ENCODE measurements at regions of chrX and their contacts with region 1.

Region 1: DNA sequence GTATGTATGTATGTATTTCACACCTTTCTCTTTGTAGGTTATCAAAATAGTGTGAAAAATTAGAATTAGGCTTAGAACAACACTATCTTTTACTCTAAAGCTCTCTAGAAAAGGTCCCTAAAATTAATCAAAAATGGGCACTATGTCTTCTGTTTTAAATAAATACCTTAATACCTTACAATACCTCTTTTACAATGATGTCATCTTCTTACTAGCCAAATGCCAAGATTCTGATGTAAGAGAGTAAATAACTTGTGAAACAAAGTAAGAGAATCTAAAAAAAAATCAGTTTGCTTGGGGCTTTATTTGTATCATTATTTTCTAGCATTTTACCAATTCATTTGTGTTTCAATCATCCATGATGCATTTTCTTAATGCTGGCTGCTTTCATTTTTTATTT is 402.2 kb upstream of the MAGEB2 start:
- DNase-seq: no peak
- ATAC-seq: no peak
- H3K4me3 ChIP-seq: no peak overlapping the region
- H3K27ac ChIP-seq: no peak overlapping the region
- H3K4me1 ChIP-seq: no peaks in the 10 kb centered on the region
- H3K27me3 ChIP-seq: no peaks in the 10 kb centered on the region
- CTCF ChIP-seq: no peak
- EP300 ChIP-seq: no peak
- POLR2A ChIP-seq: no peak
- RAD21 ChIP-seq: no peak

Region 2: DNA sequence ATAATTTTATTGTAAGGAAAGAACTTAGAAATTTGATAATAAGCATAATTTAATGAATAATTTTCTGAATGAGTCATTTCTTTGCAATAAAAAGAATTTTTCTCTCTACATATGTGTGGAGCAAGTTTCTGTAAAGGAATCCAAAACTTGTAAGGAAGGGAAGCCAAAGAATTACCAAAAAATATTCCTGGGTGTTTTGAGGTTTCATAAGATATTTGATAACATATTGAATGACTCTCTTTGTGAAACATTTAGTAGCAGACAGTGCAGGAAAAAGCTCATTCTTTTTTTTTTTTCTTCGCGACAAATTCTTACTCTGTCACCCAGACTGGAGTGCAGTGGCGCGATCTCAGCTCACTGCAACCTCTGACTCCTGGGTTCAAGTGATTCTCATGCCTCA is 66.8 kb before region 1 on chrX:
- CTCF ChIA-PET with region 1: no interaction called
- POLR2A ChIA-PET with region 1: interaction called, 11 read pairs
- RAD21 ChIA-PET with region 1: no interaction called
- SMC1A ChIA-PET with region 1: no interaction called
- in situ Hi-C with region 1: no loop called
- intact Hi-C with region 1: no loop called
- DNase-seq: no peak
- ATAC-seq: no peak
- H3K4me3 ChIP-seq: no peak overlapping the region
- H3K27ac ChIP-seq: no peak overlapping the region
- H3K4me1 ChIP-seq: no peaks in the 10 kb centered on the region
- H3K27me3 ChIP-seq: no peaks in the 10 kb centered on the region
- CTCF ChIP-seq: no peak
- EP300 ChIP-seq: no peak
- POLR2A ChIP-seq: no peak
- RAD21 ChIP-seq: no peak

Measured in GM12878 (cell line).